Vagina (tissue), 2 donors: ENCODE measurements at regions of chr5 and their contacts with region 1.

Region 1: DNA sequence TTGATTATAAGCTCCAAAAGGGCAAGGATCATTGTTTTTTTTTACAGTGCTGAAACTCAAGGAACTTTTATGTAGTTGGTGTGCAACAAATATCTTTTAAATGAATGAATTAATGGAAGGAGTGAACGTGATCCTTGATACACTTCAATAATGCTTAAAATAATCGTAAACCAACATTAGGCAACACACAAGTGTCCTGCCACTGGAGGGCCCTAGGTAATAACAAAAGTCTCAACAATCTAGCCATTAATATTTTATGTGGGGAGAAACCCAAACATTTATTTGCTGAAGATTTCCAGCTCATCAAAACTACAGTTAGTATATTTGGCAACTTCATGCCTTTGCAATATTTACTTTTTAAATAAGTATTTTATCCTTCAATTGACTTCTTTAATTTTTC is 309.0 kb upstream of the FBXL7 start:
- DNase-seq: no peak
- H3K4me3 ChIP-seq: no peak overlapping the region
- H3K27ac ChIP-seq: no peak overlapping the region
- H3K4me1 ChIP-seq: no peaks in the 10 kb centered on the region
- H3K27me3 ChIP-seq: no peaks in the 10 kb centered on the region
- CTCF ChIP-seq: no peak
- POLR2A ChIP-seq: no peak

Region 2: DNA sequence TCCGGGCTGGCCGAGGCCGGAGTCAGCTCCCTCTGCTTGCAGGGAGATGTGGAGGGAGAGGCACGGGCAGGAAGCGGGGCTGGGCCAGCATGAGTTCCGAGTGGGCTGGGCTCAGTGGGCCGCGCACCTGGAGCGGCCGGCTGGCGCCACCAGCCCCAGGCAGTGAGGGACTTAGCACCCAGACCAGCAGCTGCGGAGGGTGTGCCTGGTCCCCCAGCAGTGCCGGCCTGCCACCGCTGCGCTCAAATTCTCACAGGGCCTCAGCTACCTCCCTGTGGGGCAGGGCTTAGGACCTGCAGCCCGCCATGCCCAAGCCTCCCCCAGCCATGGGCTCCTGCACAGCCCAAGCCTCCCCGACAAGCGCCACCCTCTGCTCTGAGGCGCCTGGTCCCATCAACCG is 1946.9 kb before region 1 on chr5:
- intact Hi-C with region 1: loop called (anchors 5 kb)
- DNase-seq: no peak
- H3K4me3 ChIP-seq: no peak overlapping the region
- H3K27ac ChIP-seq: no peak overlapping the region
- H3K4me1 ChIP-seq: no peaks in the 10 kb centered on the region
- H3K27me3 ChIP-seq: no peaks in the 10 kb centered on the region
- CTCF ChIP-seq: no peak
- POLR2A ChIP-seq: no peak

Region 3: GRCh38 chr5:15417156-15417555 is 226.1 kb after region 1 on chr5:
- intact Hi-C with region 1: no loop called
- DNase-seq: no peak
- H3K4me3 ChIP-seq: no peak overlapping the region
- H3K27ac ChIP-seq: no peak overlapping the region
- H3K4me1 ChIP-seq: no peaks in the 10 kb centered on the region
- H3K27me3 ChIP-seq: no peaks in the 10 kb centered on the region
- CTCF ChIP-seq: no peak
- POLR2A ChIP-seq: no peak

Region 4: GRCh38 chr5:16065831-16066230 is 874.8 kb after region 1 on chr5:
- intact Hi-C with region 1: no loop called
- DNase-seq: no peak
- H3K4me3 ChIP-seq: no peak overlapping the region
- H3K27ac ChIP-seq: no peak overlapping the region
- H3K4me1 ChIP-seq: no peaks in the 10 kb centered on the region
- H3K27me3 ChIP-seq: no peaks in the 10 kb centered on the region
- CTCF ChIP-seq: no peak
- POLR2A ChIP-seq: no peak

Region 5: DNA sequence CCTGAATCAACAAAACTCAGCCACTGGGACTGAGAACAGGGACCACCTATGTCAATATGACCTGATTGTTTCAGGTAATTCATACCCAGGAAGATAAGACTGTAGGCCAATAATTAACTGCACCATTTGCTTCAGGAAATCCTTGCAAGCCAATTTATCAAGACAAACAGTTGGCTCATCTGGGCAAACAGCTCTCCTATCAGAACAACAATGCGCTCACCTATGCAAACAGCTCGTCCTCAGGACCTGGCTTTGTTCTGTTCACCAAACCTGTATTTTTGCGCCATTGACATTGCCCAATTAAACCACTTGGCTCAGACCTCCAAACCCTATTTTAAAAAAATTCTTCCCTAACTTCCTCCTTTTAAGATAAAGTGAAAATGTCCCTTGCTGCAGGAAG is 1080.8 kb after region 1 on chr5:
- intact Hi-C with region 1: no loop called
- DNase-seq: no peak
- H3K4me3 ChIP-seq: no peak overlapping the region
- H3K27ac ChIP-seq: no peak overlapping the region
- H3K4me1 ChIP-seq: no peaks in the 10 kb centered on the region
- H3K27me3 ChIP-seq: no peaks in the 10 kb centered on the region
- CTCF ChIP-seq: no peak
- POLR2A ChIP-seq: no peak